ENCODE measurements at regions of chr1 and their contacts with region 1.

Region 1: GRCh38 chr1:153670859-153671627 is at the start of gene ILF2:
- DNase-seq: peak; percentile 94 to 100
- H3K4me3 ChIP-seq: peak within 1 kb of the TSS; percentile 75
- H3K27ac ChIP-seq: peak within 1 kb of the TSS; percentile 72
- H3K4me1 ChIP-seq: peaks cover 13% of the 10 kb centered on the region
- H3K27me3 ChIP-seq: no peaks in the 10 kb centered on the region
- CTCF ChIP-seq: 0 out of 2 replicates have a peak, but pooled peaks have one; percentile 14
- total RNA-seq, gene ILF2: 131 and 145 TPM in 2 replicates

Region 2: GRCh38 chr1:153441238-153441933 is 229.7 kb before region 1 on chr1:
- CTCF ChIA-PET with region 1: no interaction called
- POLR2A ChIA-PET with region 1: no interaction called
- intact Hi-C with region 1: no loop called
- DNase-seq: no peak
- H3K4me3 ChIP-seq: no peak overlapping the region
- H3K27ac ChIP-seq: no peak overlapping the region
- H3K4me1 ChIP-seq: no peaks in the 10 kb centered on the region
- H3K27me3 ChIP-seq: peaks cover 69% of the 10 kb centered on the region
- CTCF ChIP-seq: no peak

Region 3: DNA sequence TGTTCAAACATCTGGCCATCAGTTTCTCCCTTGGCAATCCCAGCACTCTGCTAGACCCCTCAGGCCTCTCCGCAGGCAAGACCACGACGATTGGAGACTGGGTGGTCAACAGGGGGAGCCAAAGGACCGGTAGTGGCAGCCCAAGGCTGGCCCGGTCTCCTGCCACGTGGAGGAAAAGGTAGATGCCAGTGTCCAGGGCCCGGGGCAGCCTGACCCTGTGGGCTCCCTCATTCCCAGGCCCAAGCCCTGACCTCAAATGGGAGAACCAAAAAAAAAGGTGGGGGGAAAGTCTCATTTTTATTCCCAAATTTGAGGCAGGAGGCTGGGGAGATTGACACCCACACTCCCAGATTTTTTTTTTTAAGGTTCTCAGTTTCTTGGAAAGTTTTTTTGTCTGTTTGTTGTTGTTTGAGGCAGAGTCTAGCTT is 160.0 kb before region 1 on chr1:
- CTCF ChIA-PET with region 1: no interaction called
- POLR2A ChIA-PET with region 1: no interaction called
- intact Hi-C with region 1: loop called (anchors 2 kb)
- DNase-seq: peak; percentile 52 to 82
- H3K4me3 ChIP-seq: no peak overlapping the region
- H3K27ac ChIP-seq: no peak overlapping the region
- H3K4me1 ChIP-seq: peaks cover 51% of the 10 kb centered on the region
- H3K27me3 ChIP-seq: no peaks in the 10 kb centered on the region
- CTCF ChIP-seq: peak; percentile 96

Region 4: DNA sequence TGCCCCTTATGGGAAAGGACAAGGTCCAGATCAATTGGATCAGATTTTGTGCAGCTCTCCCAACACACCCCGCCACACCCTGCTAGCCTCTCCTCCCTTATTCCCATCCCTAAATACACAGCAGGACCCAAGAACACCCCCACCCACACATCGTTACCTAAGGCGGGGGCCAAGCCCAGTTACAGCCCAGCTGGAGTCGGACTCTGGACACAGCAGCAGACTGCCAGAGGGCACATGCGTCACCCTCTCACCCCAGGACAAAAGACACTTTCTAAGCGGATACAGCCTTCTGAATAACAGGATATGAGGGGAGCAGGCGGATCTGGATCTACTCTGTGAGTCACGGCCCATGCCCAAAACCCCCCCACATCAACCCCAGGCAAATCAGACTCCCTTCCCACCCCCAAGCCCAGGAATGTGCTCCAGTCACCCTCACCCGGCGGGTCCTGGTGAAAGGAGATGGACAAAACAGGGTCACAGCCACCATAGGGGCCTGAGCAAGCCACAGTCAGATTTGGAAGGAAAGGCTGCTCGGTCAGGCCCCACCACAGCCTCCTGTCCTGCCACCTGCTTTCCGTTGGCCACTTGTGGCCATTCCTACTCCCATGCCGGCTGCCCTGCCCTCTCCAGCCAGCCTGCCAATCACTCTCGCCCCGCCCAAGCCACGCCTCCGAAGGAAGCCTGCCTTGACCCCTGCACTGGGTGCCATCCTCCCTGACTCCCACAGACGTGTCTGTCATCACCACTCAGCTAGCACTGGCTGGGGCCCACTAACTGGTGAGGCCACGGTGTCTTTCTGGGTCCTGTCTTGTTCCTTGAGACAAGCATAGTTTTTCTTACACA is 62.1 kb before region 1 on chr1:
- CTCF ChIA-PET with region 1: no interaction called
- POLR2A ChIA-PET with region 1: no interaction called
- intact Hi-C with region 1: loop called (anchors 1 kb)
- DNase-seq: peak; percentile 94 to 98
- H3K4me3 ChIP-seq: peak overlapping the region; percentile 56
- H3K27ac ChIP-seq: peak overlapping the region; percentile 96
- H3K4me1 ChIP-seq: peaks cover 52% of the 10 kb centered on the region
- H3K27me3 ChIP-seq: no peaks in the 10 kb centered on the region
- CTCF ChIP-seq: no peak; the same call in 1 of the 2 replicates

Region 5: GRCh38 chr1:153633716-153634665 is 37.1 kb before region 1 on chr1 and contains the start of gene CHTOP:
- CTCF ChIA-PET with region 1: no interaction called
- POLR2A ChIA-PET with region 1: no interaction called
- intact Hi-C with region 1: loop called (anchors 2 kb)
- DNase-seq: peak; percentile 92 to 98
- H3K4me3 ChIP-seq: peak within 1 kb of the TSS; percentile 96
- H3K27ac ChIP-seq: peak within 1 kb of the TSS; percentile 100
- H3K4me1 ChIP-seq: peaks cover 20% of the 10 kb centered on the region
- H3K27me3 ChIP-seq: no peaks in the 10 kb centered on the region
- CTCF ChIP-seq: no peak
- total RNA-seq, gene CHTOP: 75.1 and 83.9 TPM in 2 replicates